Activated CD4-positive, alpha-beta T cell treated with anti-CD3 and anti-CD28 coated beads, Interleukin-2, amount 10 ng/mL, durations not matched to agents 24 days and 14 days (primary cell): ENCODE measurements at regions of chr4 and their contacts with region 1.

Region 1: GRCh38 chr4:40672536-40673526 is 43.2 kb upstream of the RBM47 start:
- DNase-seq: peak; percentile 87
- H3K4me3 Mint-ChIP-seq: peak overlapping the region; percentile 69
- H3K27ac Mint-ChIP-seq: peak overlapping the region; percentile 93
- H3K4me1 Mint-ChIP-seq: peaks cover 57% of the 10 kb centered on the region
- H3K27me3 Mint-ChIP-seq: no peaks in the 10 kb centered on the region

Region 2: DNA sequence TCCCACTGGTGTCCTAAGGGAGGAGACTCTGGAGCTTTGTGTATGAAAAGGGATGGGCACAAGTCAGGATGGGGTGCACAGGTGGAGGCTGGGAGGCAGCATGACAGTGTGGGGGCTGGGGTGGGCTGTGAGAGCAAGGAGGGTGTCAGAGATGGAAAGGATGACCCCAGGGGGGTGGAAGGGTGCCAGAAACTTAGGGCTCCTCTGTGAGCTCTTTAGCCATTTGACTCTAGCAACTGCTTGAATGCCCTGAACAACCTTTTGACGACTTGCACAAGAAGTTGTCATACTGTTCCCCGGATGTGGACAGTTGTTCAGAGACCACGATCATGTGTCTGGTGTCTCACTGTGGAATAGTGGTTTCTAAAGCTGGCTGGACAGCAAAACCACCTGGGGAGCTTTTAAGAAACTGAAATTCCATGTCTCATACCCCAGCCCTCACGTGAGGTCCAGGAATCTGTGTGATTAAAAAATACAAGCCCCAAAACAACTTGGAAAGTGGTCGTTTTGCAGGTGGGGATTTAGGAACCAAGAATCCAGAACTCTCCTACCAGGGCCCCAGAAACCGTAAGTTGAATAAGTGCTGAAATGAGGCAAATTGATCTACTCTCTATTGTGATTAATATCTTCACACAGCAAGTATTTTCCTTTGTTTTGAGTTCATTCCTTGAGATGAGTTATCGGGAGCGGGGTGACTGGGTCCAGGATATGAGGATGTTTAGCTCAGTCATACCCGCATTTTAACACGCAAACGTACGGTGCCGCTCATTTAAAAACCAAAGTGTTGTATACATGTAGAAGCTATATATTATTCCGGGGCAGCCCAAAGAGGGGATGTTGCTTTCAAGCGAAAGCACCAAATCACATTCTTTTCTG is 472.6 kb before region 1 on chr4:
- intact Hi-C with region 1: loop called (anchors 5 kb)
- DNase-seq: peak; percentile 93
- H3K4me3 Mint-ChIP-seq: peak overlapping the region; percentile 93
- H3K27ac Mint-ChIP-seq: peak overlapping the region; percentile 94
- H3K4me1 Mint-ChIP-seq: peaks cover 44% of the 10 kb centered on the region
- H3K27me3 Mint-ChIP-seq: no peaks in the 10 kb centered on the region

Region 3: GRCh38 chr4:40579983-40580382 is 92.8 kb before region 1 on chr4:
- intact Hi-C with region 1: loop called (anchors 5 kb)
- DNase-seq: no peak
- H3K4me3 Mint-ChIP-seq: no peak overlapping the region
- H3K27ac Mint-ChIP-seq: no peak overlapping the region
- H3K4me1 Mint-ChIP-seq: peaks cover 42% of the 10 kb centered on the region
- H3K27me3 Mint-ChIP-seq: peaks cover 3% of the 10 kb centered on the region

Region 4: DNA sequence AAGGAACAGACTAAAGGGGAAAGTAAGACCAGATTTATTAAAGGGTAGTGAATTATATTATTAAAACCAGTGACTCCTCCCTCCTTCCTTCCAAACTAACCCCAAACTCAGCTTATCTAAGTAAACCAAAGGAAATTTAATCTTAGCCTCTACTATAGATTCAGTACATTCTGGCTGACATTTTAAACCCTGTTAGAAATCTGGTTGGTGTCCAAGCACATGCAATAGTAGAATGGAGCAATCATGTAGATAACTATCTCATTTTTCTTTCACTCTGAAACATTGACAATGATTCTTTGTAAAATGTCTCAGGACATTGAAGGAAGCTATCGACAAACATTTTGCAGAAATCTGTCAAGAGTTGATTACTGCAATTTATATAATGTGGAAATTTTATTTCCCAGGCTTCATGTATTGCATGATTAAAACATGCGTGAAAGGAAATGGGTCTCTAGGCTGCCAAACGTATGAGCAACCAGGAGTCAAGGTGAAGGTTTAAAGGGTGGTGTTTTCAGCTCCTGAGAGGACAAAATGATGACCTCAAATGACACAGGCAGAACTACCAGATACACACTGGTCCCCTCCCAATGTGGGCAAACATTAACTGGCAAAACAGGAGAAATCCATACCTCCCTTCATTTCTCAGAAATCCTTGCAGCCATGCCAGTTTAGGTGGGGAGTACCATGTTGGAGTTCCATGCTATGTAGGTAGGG is 15.0 kb after region 1 on chr4:
- intact Hi-C with region 1: loop called (anchors 1 kb)
- DNase-seq: no peak
- H3K4me3 Mint-ChIP-seq: peak overlapping the region; percentile 50
- H3K27ac Mint-ChIP-seq: peak overlapping the region; percentile 94
- H3K4me1 Mint-ChIP-seq: peaks cover 20% of the 10 kb centered on the region
- H3K27me3 Mint-ChIP-seq: no peaks in the 10 kb centered on the region

Region 5: DNA sequence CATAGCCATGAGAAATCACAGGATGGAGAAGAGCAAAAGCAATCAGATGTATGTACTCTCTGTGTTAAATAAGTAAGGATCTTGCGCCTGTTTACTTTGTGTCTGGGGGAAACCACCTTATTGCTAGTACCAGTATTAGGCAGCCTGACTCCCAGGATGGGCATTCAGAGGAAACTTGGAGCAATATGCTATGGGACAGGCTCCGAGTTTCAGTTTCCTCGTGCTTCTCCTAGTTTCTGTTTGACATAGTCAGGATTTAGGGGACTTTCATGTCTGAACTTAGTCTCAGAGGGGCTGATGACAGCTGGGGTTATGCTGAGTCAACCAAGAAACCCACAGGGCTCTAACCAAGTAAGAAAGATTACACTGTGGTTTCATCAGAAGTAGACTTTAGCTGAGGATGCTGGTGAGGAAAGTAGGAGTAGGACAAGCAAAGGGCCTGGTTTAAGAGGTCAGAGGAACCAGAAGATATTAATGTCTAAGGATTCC is 90.4 kb after region 1 on chr4:
- intact Hi-C with region 1: loop called (anchors 1 kb)
- DNase-seq: peak; percentile 83
- H3K4me3 Mint-ChIP-seq: peak overlapping the region; percentile 11
- H3K27ac Mint-ChIP-seq: peak overlapping the region; percentile 45
- H3K4me1 Mint-ChIP-seq: peaks cover 11% of the 10 kb centered on the region
- H3K27me3 Mint-ChIP-seq: peaks cover 7% of the 10 kb centered on the region

Region 6: GRCh38 chr4:40811956-40812355 is 139.1 kb after region 1 on chr4:
- intact Hi-C with region 1: no loop called
- DNase-seq: no peak
- H3K4me3 Mint-ChIP-seq: no peak overlapping the region
- H3K27ac Mint-ChIP-seq: no peak overlapping the region
- H3K4me1 Mint-ChIP-seq: no peaks in the 10 kb centered on the region
- H3K27me3 Mint-ChIP-seq: peaks cover 9% of the 10 kb centered on the region

Region 7: GRCh38 chr4:41957634-41958033 is 1284.8 kb after region 1 on chr4:
- intact Hi-C with region 1: no loop called
- DNase-seq: no peak
- H3K4me3 Mint-ChIP-seq: no peak overlapping the region
- H3K27ac Mint-ChIP-seq: no peak overlapping the region
- H3K4me1 Mint-ChIP-seq: no peaks in the 10 kb centered on the region
- H3K27me3 Mint-ChIP-seq: no peaks in the 10 kb centered on the region